ENCODE measurements at regions of chr3 and their contacts with region 1.

Region 1: DNA sequence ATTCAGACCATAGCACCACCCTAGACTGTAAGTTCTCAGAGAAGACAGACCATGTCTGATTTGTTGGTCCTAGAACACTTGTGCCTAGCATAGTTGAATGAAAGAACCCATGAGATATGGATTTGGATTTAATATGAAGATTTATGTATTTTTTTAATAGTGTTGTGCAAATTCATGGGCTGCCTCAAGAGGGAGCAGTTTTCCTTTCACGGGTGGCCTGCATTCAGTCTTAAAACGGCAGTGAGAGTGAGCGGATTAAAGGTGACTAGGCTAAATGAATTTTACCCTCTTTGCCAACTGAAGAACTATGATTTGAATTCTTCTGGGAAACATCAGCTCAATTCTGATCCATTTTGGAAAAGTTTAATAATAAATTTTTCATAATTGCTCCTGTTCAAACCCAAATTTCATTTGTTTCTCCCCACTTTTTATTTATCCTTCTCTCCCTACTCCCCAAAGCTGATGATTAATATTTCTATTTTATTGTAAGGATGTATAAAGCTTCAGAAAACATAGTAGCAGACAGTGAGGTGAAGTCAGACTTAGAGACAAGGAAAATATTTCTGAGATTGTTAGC is 67.3 kb downstream of the MORC1 start:
- DNase-seq: peak in 5 of 7 donors; percentile 10 to 31 (median 20)
- H3K4me3 ChIP-seq: no peak overlapping the region
- H3K27ac ChIP-seq: no peak overlapping the region
- H3K4me1 ChIP-seq: no peaks in the 10 kb centered on the region
- H3K27me3 ChIP-seq: no peaks in the 10 kb centered on the region
- CTCF ChIP-seq: peak; percentile 34 to 58 (median 51)
- POLR2A ChIP-seq: no peak

Region 2: GRCh38 chr3:109213321-109213720 is 162.6 kb after region 1 on chr3:
- intact Hi-C with region 1: no loop called
- DNase-seq: no peak
- H3K4me3 ChIP-seq: no peak overlapping the region
- H3K27ac ChIP-seq: no peak overlapping the region
- H3K4me1 ChIP-seq: no peaks in the 10 kb centered on the region
- H3K27me3 ChIP-seq: no peaks in the 10 kb centered on the region
- CTCF ChIP-seq: no peak
- POLR2A ChIP-seq: no peak

Region 3: DNA sequence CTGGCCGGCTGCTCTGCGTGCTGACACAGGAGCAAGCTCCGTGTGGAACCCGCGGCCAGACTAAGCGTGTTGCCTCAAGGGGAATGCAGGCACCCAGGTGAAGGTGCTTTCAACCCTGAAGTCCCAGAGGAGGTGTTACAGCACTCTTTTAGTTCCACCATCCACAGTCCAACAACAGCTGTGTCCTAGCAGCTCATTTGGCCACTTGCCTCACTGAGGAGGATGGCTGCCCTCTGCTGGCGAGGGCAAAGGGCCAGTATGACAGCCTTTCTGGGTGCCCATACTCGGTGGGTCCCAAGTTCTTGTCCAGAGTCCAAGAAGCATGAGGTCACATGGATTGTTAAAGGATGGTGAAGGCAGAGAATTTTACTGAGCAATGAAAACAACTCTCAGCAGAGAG is 173.7 kb after region 1 on chr3:
- intact Hi-C with region 1: loop called in 1 of 2 experiments (anchors 10 kb)
- DNase-seq: peak in 6 of 7 donors; percentile 9 to 59 (median 30)
- H3K4me3 ChIP-seq: no peak overlapping the region
- H3K27ac ChIP-seq: no peak overlapping the region
- H3K4me1 ChIP-seq: no peaks in the 10 kb centered on the region
- H3K27me3 ChIP-seq: no peaks in the 10 kb centered on the region
- CTCF ChIP-seq: peak in 3 of 6 experiments; percentile 25 to 40 (median 26)
- POLR2A ChIP-seq: no peak